Lower leg skin (tissue), 4 donors: ENCODE measurements at regions of chr2 and their contacts with region 1.

Region 1: DNA sequence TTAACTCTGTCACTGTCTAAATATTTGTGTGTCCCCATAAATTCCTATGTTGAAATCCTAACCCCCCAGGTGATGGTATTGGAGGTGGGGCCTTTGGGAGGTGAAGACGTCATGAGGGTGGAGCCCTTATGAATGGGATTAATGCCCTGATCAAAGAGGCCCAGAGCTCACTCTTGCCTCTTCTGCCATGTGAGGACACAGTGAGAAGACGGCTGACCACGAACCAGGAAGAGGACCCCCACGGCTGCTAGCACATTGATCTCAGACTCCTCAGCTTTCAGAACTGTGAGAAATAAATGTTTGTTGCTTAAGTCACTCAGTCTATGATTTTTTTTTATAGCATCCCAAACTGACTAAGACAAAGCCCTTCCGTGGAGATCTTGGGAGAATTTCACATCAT is 71.2 kb downstream of the BCL2L11 start:
- DNase-seq: no peak
- H3K4me3 ChIP-seq: no peak overlapping the region
- CTCF ChIP-seq: no peak
- POLR2A ChIP-seq: no peak

Region 2: GRCh38 chr2:110770959-110771431 is 420.9 kb before region 1 on chr2:
- intact Hi-C with region 1: no loop called
- DNase-seq: peak; percentile 59 to 85
- H3K4me3 ChIP-seq: no peak overlapping the region
- CTCF ChIP-seq: no peak
- POLR2A ChIP-seq: no peak

Region 3: DNA sequence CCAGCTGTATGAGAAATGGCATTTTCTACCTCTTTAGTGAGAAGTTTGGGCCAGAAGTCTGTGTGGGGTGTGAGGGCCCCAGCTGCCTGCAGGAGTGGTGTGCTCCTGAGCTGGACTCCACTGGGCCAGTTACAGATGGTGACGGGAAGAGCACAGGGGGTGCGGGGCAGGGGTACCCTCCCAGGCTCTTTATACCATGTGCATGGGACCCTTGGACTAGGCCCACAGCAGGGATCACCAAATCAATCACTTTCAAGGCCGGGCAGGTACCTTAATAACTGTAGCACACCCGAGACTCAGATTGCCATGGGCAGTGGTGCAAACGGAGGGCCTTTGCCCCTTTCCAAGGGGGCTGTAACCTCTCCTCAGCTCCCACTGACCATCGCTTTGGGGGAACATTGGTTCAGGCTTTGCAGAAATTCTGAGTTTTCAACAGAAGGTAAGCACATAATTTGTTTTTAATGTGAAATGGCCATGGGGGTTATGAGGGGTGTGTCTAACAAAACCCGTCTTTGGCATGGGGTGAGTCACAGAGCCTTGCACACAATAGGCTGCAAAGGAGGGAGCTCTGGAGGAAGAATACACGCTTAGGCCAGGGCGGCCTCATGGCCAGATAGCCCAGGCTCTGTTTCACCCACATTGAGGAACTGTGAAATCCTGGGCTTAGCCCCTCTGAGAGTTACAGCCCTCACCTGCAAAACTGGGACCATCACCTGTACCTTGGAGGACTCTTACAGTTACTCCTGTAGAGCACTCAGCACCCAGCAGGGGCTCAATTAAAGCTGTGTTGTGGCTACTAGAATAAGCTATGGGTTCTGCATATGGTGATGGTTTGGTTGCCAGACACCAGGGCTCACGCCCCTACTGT is 212.2 kb before region 1 on chr2:
- intact Hi-C with region 1: loop called (anchors 2 kb)
- DNase-seq: no peak
- H3K4me3 ChIP-seq: no peak overlapping the region
- CTCF ChIP-seq: no peak
- POLR2A ChIP-seq: no peak